ENCODE measurements at regions of chr11 and their contacts with region 1.

Region 1: GRCh38 chr11:1574238-1574932 is 2.3 kb upstream of the DUSP8 start:
- DNase-seq: peak; percentile 77
- H3K4me3 ChIP-seq: peak overlapping the region; percentile 42 to 77 (median 60)
- H3K27ac ChIP-seq: peak overlapping the region; percentile 89 to 95 (median 92)
- H3K4me1 ChIP-seq: peaks cover 13 to 53% (median 41%) of the 10 kb centered on the region in 4 donors
- H3K27me3 ChIP-seq: peaks cover 2% of the 10 kb centered on the region
- CTCF ChIP-seq: peak in 4 of 5 experiments; percentile 61 to 92 (median 80)
- EP300 ChIP-seq: no peak
- POLR2A ChIP-seq: peak; percentile 18

Region 2: GRCh38 chr11:1202776-1203504 is 371.4 kb before region 1 on chr11:
- in situ Hi-C with region 1: no loop called
- intact Hi-C with region 1: loop called (anchors 5 kb)
- DNase-seq: peak; percentile 69
- H3K4me3 ChIP-seq: no peak overlapping the region
- H3K27ac ChIP-seq: peak overlapping the region in 1 of 4 donors; percentile 14
- H3K4me1 ChIP-seq: peaks cover 10 to 26% (median 21%) of the 10 kb centered on the region in 4 donors
- H3K27me3 ChIP-seq: peaks cover 32% of the 10 kb centered on the region
- CTCF ChIP-seq: peak; percentile 87 to 97 (median 95)
- EP300 ChIP-seq: no peak
- POLR2A ChIP-seq: no peak

Region 3: DNA sequence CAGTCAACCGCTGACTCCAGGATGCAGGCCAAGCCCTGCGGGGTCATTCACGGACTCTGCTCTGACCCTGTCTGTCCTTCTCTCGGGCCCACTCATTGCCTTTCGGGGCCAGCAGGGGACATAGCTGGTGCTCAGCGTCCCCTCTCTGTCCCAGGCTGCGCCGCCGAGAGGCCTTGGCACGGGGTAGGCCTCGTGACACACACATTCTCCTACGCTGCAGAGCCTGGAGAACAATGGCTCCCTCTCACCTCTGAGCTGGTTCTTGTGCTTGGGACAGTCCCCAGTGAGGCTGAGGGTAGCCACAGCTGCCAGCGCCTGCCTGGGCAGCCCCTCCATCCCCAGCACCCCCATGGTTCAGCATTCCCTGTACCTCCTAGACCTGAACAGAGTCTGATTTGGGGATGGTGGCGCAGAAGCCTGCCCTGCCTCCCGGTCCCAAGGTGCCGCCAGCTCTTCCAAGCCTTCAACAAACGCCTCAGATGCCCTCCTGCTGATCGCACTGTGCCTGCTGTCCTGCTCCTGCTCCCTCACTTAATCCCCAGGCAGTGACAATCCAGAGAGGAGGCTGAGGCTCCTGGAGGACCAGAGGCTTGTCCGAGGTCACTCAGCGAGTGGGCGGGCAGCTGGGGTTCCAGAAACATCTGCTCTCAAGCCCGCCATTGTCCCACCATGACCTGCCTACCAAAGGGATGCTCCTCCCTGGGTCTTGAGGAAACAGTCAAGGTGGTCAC is 32.7 kb before region 1 on chr11:
- in situ Hi-C with region 1: loop called in 1 of 4 experiments (anchors 5 kb)
- intact Hi-C with region 1: loop called (anchors 2 kb)
- DNase-seq: no peak
- H3K4me3 ChIP-seq: no peak overlapping the region
- H3K27ac ChIP-seq: no peak overlapping the region
- H3K4me1 ChIP-seq: peaks cover 0 to 17% (median 12%) of the 10 kb centered on the region in 4 donors
- H3K27me3 ChIP-seq: peaks cover 13% of the 10 kb centered on the region
- CTCF ChIP-seq: no peak
- EP300 ChIP-seq: no peak
- POLR2A ChIP-seq: no peak

Region 4: DNA sequence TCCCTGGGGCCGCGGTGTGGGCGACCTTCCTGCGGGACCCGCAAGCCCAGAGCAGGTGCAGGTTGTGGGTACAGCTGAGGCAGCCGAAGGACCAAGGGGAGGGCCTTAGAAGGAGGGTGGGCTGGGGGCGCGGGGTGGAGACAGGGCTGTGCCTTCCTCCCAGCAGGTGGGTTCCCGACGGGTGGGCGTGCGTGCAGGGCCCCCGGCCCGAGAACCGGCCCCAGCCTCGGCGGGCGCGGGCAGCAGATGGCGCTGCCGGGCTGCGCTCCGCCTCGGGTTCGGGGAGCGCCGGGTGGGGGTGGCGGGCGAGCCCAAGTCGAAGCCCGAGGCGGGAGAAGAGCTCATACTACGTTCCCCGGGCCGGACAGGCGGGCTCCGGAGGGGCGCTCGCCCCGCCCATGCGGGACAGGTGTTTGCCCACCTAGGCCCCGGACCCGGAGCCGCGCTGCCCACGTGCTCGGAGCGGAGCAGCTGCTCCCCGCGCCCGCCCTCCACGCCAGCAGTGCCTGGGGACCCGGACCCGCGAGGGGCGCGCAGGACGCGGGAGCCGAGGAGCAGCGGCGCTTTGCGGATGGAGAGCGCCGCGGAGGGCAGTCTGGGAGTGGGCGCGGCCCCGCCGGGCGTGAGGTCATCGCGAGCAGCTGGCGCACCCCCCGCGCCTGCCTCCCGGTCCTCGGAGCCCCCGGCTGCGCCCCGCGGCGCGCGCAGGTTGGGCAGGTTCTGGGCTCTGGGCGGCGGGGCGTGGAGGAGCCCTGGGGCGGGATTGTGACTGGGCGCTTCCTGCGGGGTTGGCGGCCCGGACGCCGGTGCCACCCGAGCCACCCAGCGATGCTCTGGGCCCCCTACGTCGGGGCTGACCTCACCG is 27.6 kb before region 1 on chr11:
- in situ Hi-C with region 1: loop called in 1 of 4 experiments (anchors 5 kb)
- intact Hi-C with region 1: loop called (anchors 2 kb)
- DNase-seq: peak; percentile 64
- H3K4me3 ChIP-seq: peak overlapping the region; percentile 14 to 50 (median 36)
- H3K27ac ChIP-seq: peak overlapping the region; percentile 62 to 78 (median 72)
- H3K4me1 ChIP-seq: peaks cover 12 to 34% (median 33%) of the 10 kb centered on the region in 4 donors
- H3K27me3 ChIP-seq: peaks cover 26% of the 10 kb centered on the region
- CTCF ChIP-seq: peak; percentile 59 to 89 (median 73)
- EP300 ChIP-seq: no peak
- POLR2A ChIP-seq: no peak

Region 5: DNA sequence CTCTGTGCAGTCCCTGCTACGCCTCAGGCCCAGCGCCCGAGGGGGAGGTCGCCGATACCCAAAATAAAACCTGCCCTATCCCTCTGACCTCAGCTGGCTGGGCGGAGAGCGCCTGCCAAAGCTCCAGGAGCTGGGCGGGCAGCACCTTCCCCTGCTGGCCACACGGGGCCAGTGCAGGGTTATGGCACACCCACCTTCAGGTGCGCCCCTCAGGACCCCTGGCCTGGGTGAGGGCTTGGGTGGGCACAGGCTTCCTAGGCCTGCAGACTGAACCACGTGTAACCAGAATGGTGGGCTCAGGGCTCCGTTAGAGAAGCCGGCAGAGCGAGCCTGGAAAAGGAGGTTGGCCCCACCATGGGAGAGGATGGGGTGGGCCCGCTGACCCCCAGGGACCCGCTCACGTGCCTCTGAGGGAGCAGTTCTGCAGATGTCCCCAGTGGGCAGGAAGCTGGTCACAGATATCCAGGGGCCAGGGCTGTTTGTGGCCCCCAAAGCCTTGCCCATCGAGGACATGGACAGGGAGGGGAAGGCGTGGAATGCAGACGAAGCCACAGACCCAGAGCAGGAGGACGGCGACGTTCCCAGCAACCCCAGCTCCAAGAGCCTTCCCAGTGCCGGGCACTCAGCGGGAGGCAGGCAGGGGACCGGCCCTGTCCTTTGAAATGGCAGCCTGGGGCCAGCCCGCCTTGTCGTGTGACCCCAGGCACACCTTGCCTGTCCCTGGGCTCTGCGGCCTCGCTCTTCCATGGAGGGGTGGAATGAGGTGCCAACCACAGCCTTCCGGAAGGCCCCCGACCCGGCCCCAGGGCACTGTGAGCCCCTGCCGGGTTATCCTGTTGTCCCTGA is 343.5 kb after region 1 on chr11:
- in situ Hi-C with region 1: no loop called
- intact Hi-C with region 1: no loop called
- DNase-seq: no peak
- H3K4me3 ChIP-seq: no peak overlapping the region
- H3K27ac ChIP-seq: no peak overlapping the region
- H3K4me1 ChIP-seq: no peaks in the 10 kb centered on the region
- H3K27me3 ChIP-seq: no peaks in the 10 kb centered on the region
- CTCF ChIP-seq: peak; percentile 46 to 59 (median 49)
- EP300 ChIP-seq: no peak
- POLR2A ChIP-seq: no peak